ENCODE measurements at regions of chr21 and their contacts with region 1.

Region 1: GRCh38 chr21:31335957-31336738 is 7.9 kb downstream of the TIAM1 start:
- DNase-seq: peak in 1 of 2 donors; percentile 29
- ATAC-seq: peak in 7 of 8 donors; percentile 67 to 91 (median 82)
- H3K4me3 ChIP-seq: no peak overlapping the region
- H3K27ac ChIP-seq: peak overlapping the region in 1 of 10 donors; percentile 31
- H3K4me1 ChIP-seq: peaks cover 0 to 23% (median 0%) of the 10 kb centered on the region in 9 donors
- H3K27me3 ChIP-seq: peaks cover 0 to 22% (median 4%) of the 10 kb centered on the region in 7 donors
- CTCF ChIP-seq: no peak

Region 2: GRCh38 chr21:31255896-31256295 is 80.3 kb before region 1 on chr21:
- intact Hi-C with region 1: loop called in 1 of 10 experiments (anchors 10 kb)
- DNase-seq: no peak
- ATAC-seq: no peak
- H3K4me3 ChIP-seq: no peak overlapping the region
- H3K27ac ChIP-seq: no peak overlapping the region
- H3K4me1 ChIP-seq: peaks cover 0 to 8% (median 0%) of the 10 kb centered on the region in 9 donors
- H3K27me3 ChIP-seq: peaks cover 0 to 3% (median 0%) of the 10 kb centered on the region in 7 donors
- CTCF ChIP-seq: no peak

Measured in heart right ventricle (tissue), 16 donors.